ENCODE measurements at regions of chr1 and their contacts with region 1.

Region 1: GRCh38 chr1:32828341-32828740 is 10.9 kb downstream of the S100PBP start:
- DNase-seq: peak; percentile 28
- ATAC-seq: no peak
- H3K4me3 ChIP-seq: no peak overlapping the region
- H3K27ac ChIP-seq: no peak overlapping the region
- H3K4me1 ChIP-seq: no peaks in the 10 kb centered on the region
- H3K27me3 ChIP-seq: no peaks in the 10 kb centered on the region
- CTCF ChIP-seq: peak; percentile 35; the same call in 1 of the 2 replicates
- POLR2A ChIP-seq: no peak
- RAD21 ChIP-seq: peak; percentile 31; the same call in 1 of the 2 replicates

Region 2: GRCh38 chr1:33007190-33008050 is 179.1 kb after region 1 on chr1:
- CTCF ChIA-PET with region 1: no interaction called
- POLR2A ChIA-PET with region 1: no interaction called
- dilution Hi-C with region 1: no loop called
- in situ Hi-C with region 1: no loop called
- intact Hi-C with region 1: no loop called
- DNase-seq: peak; percentile 94
- ATAC-seq: peak; percentile 96
- H3K4me3 ChIP-seq: no peak overlapping the region
- H3K27ac ChIP-seq: no peak overlapping the region
- H3K4me1 ChIP-seq: peaks cover 25% of the 10 kb centered on the region
- H3K27me3 ChIP-seq: no peaks in the 10 kb centered on the region
- CTCF ChIP-seq: peak; percentile 89
- POLR2A ChIP-seq: peak; percentile 47; the same call in 1 of the 2 replicates
- RAD21 ChIP-seq: peak; percentile 92

Region 3: GRCh38 chr1:33080885-33081553 is 252.7 kb after region 1 on chr1 and contains the start of gene AZIN2:
- CTCF ChIA-PET with region 1: no interaction called
- POLR2A ChIA-PET with region 1: no interaction called
- dilution Hi-C with region 1: no loop called
- in situ Hi-C with region 1: no loop called
- intact Hi-C with region 1: loop called (anchors 10 kb)
- DNase-seq: peak; percentile 92
- ATAC-seq: peak; percentile 97
- H3K4me3 ChIP-seq: peak within 1 kb of the TSS; percentile 89
- H3K27ac ChIP-seq: peak within 1 kb of the TSS; percentile 78
- H3K4me1 ChIP-seq: no peaks in the 10 kb centered on the region; the same call in none of the 2 replicates
- H3K27me3 ChIP-seq: no peaks in the 10 kb centered on the region
- CTCF ChIP-seq: no peak
- POLR2A ChIP-seq: peak; percentile 83
- RAD21 ChIP-seq: no peak
- total RNA-seq, gene AZIN2: 2.2 and 4.7 TPM in 2 replicates